Caco-2 (cell line): ENCODE measurements at regions of chr4 and their contacts with region 1.

Region 1: GRCh38 chr4:183504064-183504929 is 561 bp upstream of the ING2 start:
- DNase-seq: peak; percentile 98 to 99
- H3K4me3 ChIP-seq: peak overlapping the region; percentile 73
- H3K4me3 Mint-ChIP-seq: peak overlapping the region; percentile 96
- H3K27ac Mint-ChIP-seq: peak overlapping the region; percentile 97
- H3K4me1 ChIP-seq: peaks cover 30% of the 10 kb centered on the region
- H3K4me1 Mint-ChIP-seq: peaks cover 12% of the 10 kb centered on the region
- H3K27me3 ChIP-seq: no peaks in the 10 kb centered on the region
- H3K27me3 Mint-ChIP-seq: no peaks in the 10 kb centered on the region
- CTCF ChIP-seq: no peak

Region 2: DNA sequence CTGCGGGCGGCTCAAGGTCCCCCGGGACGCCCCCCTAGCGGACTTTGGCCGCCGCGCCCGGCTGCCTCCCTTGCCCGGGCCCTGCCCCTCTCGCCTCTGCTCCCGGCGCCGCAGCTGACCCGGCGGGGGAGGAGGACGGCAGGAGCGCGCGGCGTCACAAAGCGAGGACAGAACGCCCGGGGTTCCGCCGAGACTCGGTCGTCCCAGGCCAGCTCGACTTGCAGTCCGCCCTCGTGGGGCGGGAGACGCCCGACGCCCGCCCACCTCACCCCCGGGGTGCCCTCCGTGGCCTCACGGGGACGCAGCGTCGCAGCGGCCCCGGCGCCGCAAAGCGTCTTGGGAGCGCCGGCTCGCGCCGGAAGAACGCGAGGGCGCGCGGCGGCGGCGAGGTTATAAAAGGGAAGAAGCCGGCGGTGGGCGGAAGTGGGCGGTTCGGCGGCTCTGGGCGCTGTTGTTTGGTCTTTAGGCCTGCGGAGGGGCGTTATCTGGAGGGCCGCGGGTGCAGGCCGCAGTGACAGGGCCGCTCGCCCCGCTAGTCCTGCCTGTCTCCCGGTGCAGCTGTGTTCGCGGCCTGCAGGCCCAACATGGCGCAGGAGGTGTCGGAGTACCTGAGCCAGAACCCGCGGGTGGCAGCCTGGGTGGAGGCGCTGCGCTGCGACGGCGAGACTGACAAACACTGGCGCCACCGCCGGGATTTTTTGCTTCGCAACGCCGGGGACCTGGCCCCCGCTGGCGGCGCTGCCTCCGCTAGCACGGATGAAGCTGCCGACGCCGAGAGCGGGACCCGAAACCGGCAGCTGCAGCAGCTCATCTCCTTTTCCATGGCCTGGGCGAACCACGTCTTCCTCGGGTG is 59.9 kb before region 1 on chr4 and contains the start of gene CDKN2AIP:
- CTCF ChIA-PET with region 1: no interaction called
- POLR2A ChIA-PET with region 1: interaction called, 6 read pairs
- intact Hi-C with region 1: loop called (anchors 1 kb)
- DNase-seq: peak; percentile 94
- H3K4me3 ChIP-seq: peak within 1 kb of the TSS; percentile 93
- H3K4me3 Mint-ChIP-seq: peak within 1 kb of the TSS; percentile 93
- H3K27ac Mint-ChIP-seq: peak within 1 kb of the TSS; percentile 94
- H3K4me1 ChIP-seq: peaks cover 39% of the 10 kb centered on the region
- H3K4me1 Mint-ChIP-seq: peaks cover 14% of the 10 kb centered on the region
- H3K27me3 ChIP-seq: no peaks in the 10 kb centered on the region
- H3K27me3 Mint-ChIP-seq: no peaks in the 10 kb centered on the region
- CTCF ChIP-seq: peak in 1 of 2 experiments; percentile 12
- total RNA-seq, gene CDKN2AIP: 13.9 and 17.5 TPM in 2 replicates

Region 3: DNA sequence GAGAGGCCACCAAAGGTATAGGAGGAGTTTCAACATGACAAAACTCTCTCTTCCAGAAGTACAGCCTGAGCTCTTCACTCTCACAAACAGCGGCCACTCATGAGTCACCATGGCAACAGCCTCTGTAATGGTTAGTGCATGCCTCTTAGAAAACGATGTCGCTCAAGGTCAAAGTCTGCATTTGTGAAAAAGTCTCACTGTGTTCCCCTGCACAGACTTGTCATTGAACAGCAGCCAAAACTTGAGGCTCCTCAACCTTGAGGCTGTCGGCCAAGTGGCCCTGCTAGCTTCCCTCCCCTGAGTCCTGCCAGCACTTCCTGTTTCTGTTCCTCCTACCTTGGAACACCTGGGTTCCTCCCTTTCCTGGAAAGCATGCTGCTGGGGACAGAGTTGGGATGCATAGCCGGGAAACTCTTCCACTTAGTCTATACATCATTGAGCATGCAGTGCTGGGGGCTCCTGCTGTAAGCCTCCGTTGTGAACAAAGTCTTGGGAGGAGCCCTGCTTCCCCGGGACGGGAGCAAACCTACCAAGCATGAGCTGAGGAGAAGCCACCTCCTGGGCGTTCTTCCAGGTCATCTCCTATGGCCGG is 67.1 kb after region 1 on chr4:
- CTCF ChIA-PET with region 1: no interaction called
- POLR2A ChIA-PET with region 1: interaction called, 3 read pairs
- intact Hi-C with region 1: loop called (anchors 2 kb)
- DNase-seq: peak; percentile 44 to 54
- H3K4me3 ChIP-seq: no peak overlapping the region
- H3K4me3 Mint-ChIP-seq: peak overlapping the region; percentile 48
- H3K27ac Mint-ChIP-seq: peak overlapping the region; percentile 62
- H3K4me1 ChIP-seq: no peaks in the 10 kb centered on the region
- H3K4me1 Mint-ChIP-seq: no peaks in the 10 kb centered on the region
- H3K27me3 ChIP-seq: no peaks in the 10 kb centered on the region
- H3K27me3 Mint-ChIP-seq: peaks cover 7% of the 10 kb centered on the region
- CTCF ChIP-seq: no peak

Region 4: DNA sequence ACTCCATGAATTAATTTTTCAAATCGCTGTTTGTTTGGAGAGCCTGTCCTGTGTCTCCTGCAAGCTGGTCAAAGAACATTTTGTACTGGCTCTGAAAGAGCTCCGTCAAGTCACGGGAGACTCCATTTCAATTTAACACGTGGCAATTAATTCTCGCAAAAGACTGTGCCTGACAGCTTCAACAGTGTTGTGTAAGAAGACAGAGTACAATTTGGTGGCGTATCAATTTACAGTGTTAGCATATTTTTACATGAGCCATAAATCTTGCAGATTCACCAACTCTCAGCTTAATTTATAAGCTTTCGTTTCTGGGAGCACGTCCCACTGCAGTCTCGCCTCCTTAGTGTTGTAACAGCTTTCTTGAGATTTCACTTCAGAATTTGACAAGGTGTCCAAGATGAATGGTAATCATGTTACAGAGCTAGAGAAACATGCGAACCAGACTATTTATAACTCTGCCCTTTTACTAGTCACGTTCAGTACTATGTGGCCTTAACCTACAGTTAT is 83.9 kb after region 1 on chr4:
- CTCF ChIA-PET with region 1: no interaction called
- POLR2A ChIA-PET with region 1: no interaction called
- intact Hi-C with region 1: no loop called
- DNase-seq: no peak
- H3K4me3 ChIP-seq: no peak overlapping the region
- H3K4me3 Mint-ChIP-seq: no peak overlapping the region
- H3K27ac Mint-ChIP-seq: no peak overlapping the region
- H3K4me1 ChIP-seq: no peaks in the 10 kb centered on the region
- H3K4me1 Mint-ChIP-seq: no peaks in the 10 kb centered on the region
- H3K27me3 ChIP-seq: no peaks in the 10 kb centered on the region
- H3K27me3 Mint-ChIP-seq: no peaks in the 10 kb centered on the region
- CTCF ChIP-seq: no peak

Region 5: DNA sequence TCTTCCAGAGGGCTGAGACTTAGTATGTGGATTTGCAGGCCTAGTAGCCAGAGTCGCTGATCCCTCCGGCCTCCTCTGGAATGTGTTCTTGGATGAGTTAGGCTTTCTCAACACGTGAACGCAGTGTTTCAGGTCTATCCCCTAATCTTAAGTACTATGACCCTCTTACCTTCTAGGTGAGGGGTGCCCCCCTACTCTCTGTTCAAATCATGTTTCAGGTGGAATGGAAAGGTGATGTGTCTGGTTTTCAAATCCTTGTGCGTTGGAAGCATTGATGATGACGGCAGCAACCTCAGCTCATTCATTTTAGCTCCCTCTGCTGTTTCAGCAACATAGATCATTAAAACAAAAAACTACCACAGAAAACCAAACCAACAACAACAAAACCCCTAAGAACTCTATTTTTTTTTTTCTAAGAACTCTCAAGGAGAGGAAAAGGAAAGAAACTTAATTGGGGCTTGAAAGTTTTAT is 98.3 kb after region 1 on chr4:
- CTCF ChIA-PET with region 1: interaction called, 21 read pairs
- POLR2A ChIA-PET with region 1: interaction called, 3 read pairs
- intact Hi-C with region 1: no loop called
- DNase-seq: no peak
- H3K4me3 ChIP-seq: no peak overlapping the region
- H3K4me3 Mint-ChIP-seq: no peak overlapping the region
- H3K27ac Mint-ChIP-seq: no peak overlapping the region
- H3K4me1 ChIP-seq: no peaks in the 10 kb centered on the region
- H3K4me1 Mint-ChIP-seq: no peaks in the 10 kb centered on the region
- H3K27me3 ChIP-seq: no peaks in the 10 kb centered on the region
- H3K27me3 Mint-ChIP-seq: no peaks in the 10 kb centered on the region
- CTCF ChIP-seq: peak in 1 of 2 experiments; percentile 31

Region 6: GRCh38 chr4:183659029-183659871 is 155.0 kb after region 1 on chr4 and contains the starts of genes RWDD4 and TRAPPC11:
- CTCF ChIA-PET with region 1: interaction called, 3 read pairs
- POLR2A ChIA-PET with region 1: no interaction called
- intact Hi-C with region 1: loop called (anchors 1 kb)
- DNase-seq: peak; percentile 97 to 99
- H3K4me3 ChIP-seq: peak within 1 kb of the TSS; percentile 69
- H3K4me3 Mint-ChIP-seq: peak within 1 kb of the TSS; percentile 84
- H3K27ac Mint-ChIP-seq: peak within 1 kb of the TSS; percentile 89
- H3K4me1 ChIP-seq: peaks cover 10% of the 10 kb centered on the region; the same call in 1 of the 2 replicates
- H3K4me1 Mint-ChIP-seq: no peaks in the 10 kb centered on the region
- H3K27me3 ChIP-seq: no peaks in the 10 kb centered on the region
- H3K27me3 Mint-ChIP-seq: no peaks in the 10 kb centered on the region
- CTCF ChIP-seq: no peak
- total RNA-seq, gene RWDD4: 15.3 and 17.4 TPM in 2 replicates
- total RNA-seq, gene TRAPPC11: 23.2 and 25.7 TPM in 2 replicates